ENCODE measurements at regions of chr19 and their contacts with region 1.

Region 1: GRCh38 chr19:4534836-4535658 is at the start of gene PLIN5:
- DNase-seq: no peak
- H3K4me3 ChIP-seq: no peak within 1 kb of the TSS; the same call in 1 of the 2 replicates
- H3K27me3 ChIP-seq: peaks cover 7% of the 10 kb centered on the region
- CTCF ChIP-seq: no peak
- polyA plus RNA-seq, gene PLIN5: not detected in 2 replicates

Region 2: DNA sequence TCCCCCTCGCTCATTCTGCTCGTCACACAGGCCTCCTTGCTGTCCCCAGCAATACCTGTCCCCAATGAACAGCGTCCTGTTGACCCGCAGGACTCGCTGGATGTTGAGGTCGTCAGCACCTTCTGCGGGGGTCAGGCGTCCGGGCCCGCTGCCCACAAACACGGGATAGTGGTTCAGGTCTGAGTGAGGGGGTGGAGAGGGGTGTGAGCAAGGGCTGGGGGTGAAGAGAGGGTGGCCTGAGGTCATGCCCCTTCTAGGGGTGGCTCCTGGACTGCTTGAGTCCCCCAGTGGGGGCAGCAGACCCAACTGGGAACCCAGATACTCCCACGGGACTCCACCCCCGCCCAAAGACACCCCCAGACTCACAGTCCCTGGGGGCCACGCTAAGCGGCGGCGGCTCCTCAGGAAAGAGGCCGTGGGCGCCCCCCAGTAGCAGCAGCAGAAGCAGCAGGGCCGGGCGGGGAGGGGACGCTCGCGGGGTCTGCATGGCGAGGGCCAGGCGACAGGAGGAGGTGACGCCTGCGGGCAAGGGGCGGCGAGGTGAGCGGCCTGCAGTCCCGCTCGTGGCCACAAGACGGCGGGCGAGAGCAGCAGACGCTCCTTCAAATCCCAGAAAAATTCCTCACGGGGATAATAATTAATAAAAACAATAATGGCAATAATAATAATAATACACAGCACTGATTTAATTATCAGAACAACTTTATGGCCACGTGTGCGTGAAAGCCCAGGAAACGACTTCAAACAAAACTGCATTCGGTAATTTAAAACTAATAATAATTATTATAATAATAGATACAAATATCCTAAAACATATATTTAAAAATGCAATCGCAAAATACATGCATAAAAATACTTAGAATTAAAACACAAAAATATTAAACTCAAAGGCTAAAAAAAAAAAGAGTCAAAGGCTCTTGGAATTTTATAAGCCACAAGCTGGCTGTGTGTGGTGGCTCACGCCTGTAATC is 23.2 kb after region 1 on chr19:
- CTCF ChIA-PET with region 1: interaction called, 11 read pairs
- POLR2A ChIA-PET with region 1: no interaction called
- DNase-seq: no peak
- H3K4me3 ChIP-seq: no peak overlapping the region
- H3K27me3 ChIP-seq: no peaks in the 10 kb centered on the region
- CTCF ChIP-seq: peak; percentile 96

Region 3: GRCh38 chr19:4568886-4569285 is 33.8 kb after region 1 on chr19:
- CTCF ChIA-PET with region 1: no interaction called
- POLR2A ChIA-PET with region 1: no interaction called
- DNase-seq: no peak
- H3K4me3 ChIP-seq: no peak overlapping the region
- H3K27me3 ChIP-seq: no peaks in the 10 kb centered on the region
- CTCF ChIP-seq: no peak